ENCODE measurements at regions of chr20 and their contacts with region 1.

Region 1: DNA sequence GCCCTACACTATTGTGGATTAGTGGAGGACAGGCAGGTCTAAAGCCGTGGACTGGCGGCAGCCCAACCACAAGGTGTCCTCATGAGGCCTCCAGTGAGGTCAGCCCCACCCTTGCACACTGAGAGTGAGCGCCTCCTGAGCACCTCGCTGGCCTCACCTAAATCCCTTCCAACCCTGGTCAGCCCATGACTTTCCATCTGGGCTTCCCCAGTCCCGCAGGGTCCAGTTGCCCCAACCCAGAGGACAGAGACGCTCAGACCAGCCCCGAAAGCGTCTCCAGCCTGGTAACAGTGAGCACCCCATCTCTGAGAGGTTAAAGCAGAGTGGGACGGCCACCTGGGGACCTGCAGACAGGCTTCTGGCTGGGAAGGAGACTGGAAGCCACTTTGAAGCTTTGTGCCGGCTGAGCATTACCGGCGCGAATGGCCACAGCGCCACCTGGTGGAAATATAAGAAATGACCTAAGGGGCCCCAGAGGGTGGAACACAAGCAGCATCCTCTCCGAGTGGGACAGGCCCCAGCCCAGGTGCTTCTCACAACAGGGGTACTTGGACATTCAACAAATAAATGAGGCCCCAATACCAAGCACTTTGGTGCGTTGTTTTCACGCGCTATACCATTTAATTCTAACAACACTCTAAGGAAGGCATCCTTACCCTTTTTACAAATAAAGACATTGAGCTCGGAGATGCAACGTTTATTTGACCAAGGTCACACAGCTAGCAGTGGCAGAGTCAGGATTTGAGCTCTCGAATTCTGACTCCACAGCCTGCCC is 65.7 kb upstream of the TOP1 start:
- DNase-seq: peak; percentile 59 to 66 (median 65)
- H3K4me3 ChIP-seq: no peak overlapping the region
- H3K4me3 Mint-ChIP-seq: no peak overlapping the region
- H3K27ac ChIP-seq: no peak overlapping the region
- H3K27ac Mint-ChIP-seq: peak overlapping the region in 1 of 7 donors; percentile 8
- H3K4me1 ChIP-seq: peaks cover 21% of the 10 kb centered on the region in 2 donors
- H3K4me1 Mint-ChIP-seq: peaks cover 24% of the 10 kb centered on the region
- H3K27me3 ChIP-seq: no peaks in the 10 kb centered on the region
- H3K27me3 Mint-ChIP-seq: peaks cover 0 to 6% (median 2%) of the 10 kb centered on the region in 3 donors
- CTCF ChIP-seq: peak; percentile 87

Region 2: GRCh38 chr20:39264506-39265172 is 1698.3 kb before region 1 on chr20:
- intact Hi-C with region 1: loop called (anchors 5 kb)
- DNase-seq: peak; percentile 16 to 56 (median 18)
- H3K4me3 ChIP-seq: no peak overlapping the region
- H3K4me3 Mint-ChIP-seq: no peak overlapping the region
- H3K27ac ChIP-seq: no peak overlapping the region
- H3K27ac Mint-ChIP-seq: peak overlapping the region in 1 of 7 donors; percentile 13
- H3K4me1 ChIP-seq: no peaks in the 10 kb centered on the region
- H3K4me1 Mint-ChIP-seq: no peaks in the 10 kb centered on the region
- H3K27me3 ChIP-seq: no peaks in the 10 kb centered on the region
- H3K27me3 Mint-ChIP-seq: peaks cover 0 to 5% (median 1%) of the 10 kb centered on the region in 3 donors
- CTCF ChIP-seq: peak; percentile 91

Region 3: DNA sequence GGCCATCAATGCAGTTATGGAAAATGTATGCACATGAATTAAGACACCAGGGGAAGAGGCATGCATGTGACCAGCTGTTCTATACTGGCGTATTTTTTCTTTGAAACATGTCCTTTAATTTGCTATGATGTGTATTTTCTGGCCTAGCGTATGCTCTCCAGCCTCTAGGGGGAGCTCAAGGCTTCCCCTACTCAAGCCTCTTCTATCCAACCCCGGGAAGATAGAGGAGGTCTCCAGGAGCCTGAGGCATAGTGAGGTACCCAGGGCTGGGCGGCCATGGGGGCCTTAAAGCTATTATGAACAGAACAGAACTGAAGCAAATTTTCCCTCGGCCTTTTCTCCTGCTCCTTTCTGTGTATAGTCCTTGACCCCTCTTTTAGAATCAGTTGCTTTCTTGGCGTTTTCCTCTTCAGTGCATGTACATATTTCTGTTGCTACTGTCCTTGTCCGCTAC is 802.8 kb before region 1 on chr20:
- intact Hi-C with region 1: loop called (anchors 5 to 10 kb)
- DNase-seq: peak; percentile 49 to 65 (median 61)
- H3K4me3 ChIP-seq: no peak overlapping the region
- H3K4me3 Mint-ChIP-seq: no peak overlapping the region
- H3K27ac ChIP-seq: no peak overlapping the region
- H3K27ac Mint-ChIP-seq: no peak overlapping the region
- H3K4me1 ChIP-seq: no peaks in the 10 kb centered on the region
- H3K4me1 Mint-ChIP-seq: no peaks in the 10 kb centered on the region
- H3K27me3 ChIP-seq: peaks cover 5 to 6% of the 10 kb centered on the region in 2 donors
- H3K27me3 Mint-ChIP-seq: peaks cover 1 to 14% (median 2%) of the 10 kb centered on the region in 3 donors
- CTCF ChIP-seq: peak; percentile 90

Region 4: DNA sequence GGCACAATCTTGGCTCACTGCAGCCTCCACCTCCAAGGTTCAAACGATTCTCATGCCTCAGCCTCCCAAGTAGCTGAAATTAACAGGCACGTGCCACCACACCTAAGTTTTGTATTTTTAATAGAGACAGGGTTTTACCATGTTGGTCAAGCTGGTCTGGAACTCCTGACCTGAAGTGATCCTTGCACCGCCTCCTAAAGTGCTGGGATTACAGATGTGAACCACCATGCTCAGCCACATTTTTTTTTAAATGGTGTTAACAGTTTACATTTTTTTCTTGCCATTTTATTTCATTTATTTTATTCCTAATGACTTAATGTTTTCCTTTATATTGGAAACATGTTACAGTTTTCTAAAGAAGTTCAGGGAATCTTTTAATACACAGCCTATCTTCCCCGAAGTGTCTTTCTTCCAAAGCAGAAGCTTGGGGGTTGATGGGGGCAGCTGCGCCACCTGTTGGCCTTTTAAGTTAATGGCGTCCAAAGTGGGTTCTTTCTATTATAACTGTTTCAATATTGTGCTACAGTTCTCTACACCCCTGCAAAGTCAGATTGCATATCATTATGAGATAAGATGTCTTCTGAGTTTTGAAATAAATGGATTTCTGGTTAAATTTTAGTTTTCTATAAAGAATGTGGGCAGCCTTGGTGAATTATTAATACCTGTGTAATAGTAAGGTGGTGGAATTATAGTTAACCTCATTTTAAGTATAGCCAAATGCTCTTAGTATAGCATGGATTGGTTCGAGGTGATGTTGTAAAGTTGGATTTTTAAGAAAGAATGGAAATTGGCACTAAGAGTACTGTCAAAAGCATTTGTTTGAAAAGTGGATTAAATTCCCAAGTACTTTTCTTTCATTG is 132.4 kb after region 1 on chr20:
- intact Hi-C with region 1: loop called (anchors 1 to 2 kb)
- DNase-seq: peak; percentile 43 to 62 (median 56)
- H3K4me3 ChIP-seq: no peak overlapping the region
- H3K4me3 Mint-ChIP-seq: no peak overlapping the region
- H3K27ac ChIP-seq: no peak overlapping the region
- H3K27ac Mint-ChIP-seq: peak overlapping the region in 2 of 7 donors; percentile 32 to 35
- H3K4me1 ChIP-seq: no peaks in the 10 kb centered on the region
- H3K4me1 Mint-ChIP-seq: peaks cover 2% of the 10 kb centered on the region
- H3K27me3 ChIP-seq: no peaks in the 10 kb centered on the region
- H3K27me3 Mint-ChIP-seq: no peaks in the 10 kb centered on the region
- CTCF ChIP-seq: peak; percentile 90

Region 5: DNA sequence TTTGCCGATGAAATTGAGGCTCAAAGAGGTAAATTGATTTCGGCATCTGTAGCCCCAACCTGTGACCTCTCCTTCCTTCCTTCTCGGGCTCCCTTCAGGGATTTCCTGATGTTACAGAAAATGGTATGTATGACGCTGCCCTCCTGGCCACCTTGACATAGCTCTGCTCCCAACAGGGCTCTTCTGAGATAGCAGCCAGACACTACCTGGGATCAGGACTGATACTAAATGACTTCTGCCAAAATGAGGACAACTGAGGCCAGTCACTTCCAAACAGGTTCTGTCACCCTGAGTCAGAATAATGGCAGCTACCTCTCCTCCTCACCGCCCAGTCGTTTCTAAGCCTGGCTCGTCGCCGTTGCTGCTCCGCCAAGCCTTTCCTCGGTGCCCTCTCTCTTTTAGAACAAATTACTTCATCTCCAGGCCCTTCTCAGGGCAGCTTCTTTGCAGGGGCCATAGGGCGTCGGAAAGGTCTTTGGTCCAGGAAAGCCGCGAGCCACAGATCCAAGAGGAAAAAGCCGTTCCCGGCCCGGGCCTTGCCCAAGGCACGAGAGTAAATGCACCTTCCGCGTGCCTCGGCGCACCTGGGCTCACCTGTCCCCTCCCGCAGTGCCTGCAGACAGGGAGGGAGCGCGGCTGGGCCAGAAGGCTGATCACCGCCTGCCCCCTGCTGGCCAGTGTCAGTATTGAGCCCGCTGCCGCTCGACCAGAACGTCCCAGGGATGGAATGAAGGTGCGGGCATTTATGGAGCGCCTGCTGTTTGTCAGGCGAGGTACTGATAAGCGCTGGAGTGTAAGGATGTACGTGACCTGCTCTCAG is 376.8 kb after region 1 on chr20:
- intact Hi-C with region 1: loop called in 1 of 2 experiments (anchors 10 kb)
- DNase-seq: peak; percentile 48 to 69 (median 62)
- H3K4me3 ChIP-seq: peak overlapping the region in 1 of 3 experiments; percentile 56
- H3K4me3 Mint-ChIP-seq: peak overlapping the region; percentile 69 to 70
- H3K27ac ChIP-seq: no peak overlapping the region
- H3K27ac Mint-ChIP-seq: no peak overlapping the region
- H3K4me1 ChIP-seq: peaks cover 13 to 14% of the 10 kb centered on the region in 2 donors
- H3K4me1 Mint-ChIP-seq: peaks cover 12% of the 10 kb centered on the region
- H3K27me3 ChIP-seq: peaks cover 5 to 20% of the 10 kb centered on the region in 2 donors
- H3K27me3 Mint-ChIP-seq: peaks cover 20 to 53% (median 32%) of the 10 kb centered on the region in 3 donors
- CTCF ChIP-seq: peak; percentile 99

Measured in CD14-positive monocyte (primary cell).